ENCODE measurements at regions of chr13 and their contacts with region 1.

Region 1: DNA sequence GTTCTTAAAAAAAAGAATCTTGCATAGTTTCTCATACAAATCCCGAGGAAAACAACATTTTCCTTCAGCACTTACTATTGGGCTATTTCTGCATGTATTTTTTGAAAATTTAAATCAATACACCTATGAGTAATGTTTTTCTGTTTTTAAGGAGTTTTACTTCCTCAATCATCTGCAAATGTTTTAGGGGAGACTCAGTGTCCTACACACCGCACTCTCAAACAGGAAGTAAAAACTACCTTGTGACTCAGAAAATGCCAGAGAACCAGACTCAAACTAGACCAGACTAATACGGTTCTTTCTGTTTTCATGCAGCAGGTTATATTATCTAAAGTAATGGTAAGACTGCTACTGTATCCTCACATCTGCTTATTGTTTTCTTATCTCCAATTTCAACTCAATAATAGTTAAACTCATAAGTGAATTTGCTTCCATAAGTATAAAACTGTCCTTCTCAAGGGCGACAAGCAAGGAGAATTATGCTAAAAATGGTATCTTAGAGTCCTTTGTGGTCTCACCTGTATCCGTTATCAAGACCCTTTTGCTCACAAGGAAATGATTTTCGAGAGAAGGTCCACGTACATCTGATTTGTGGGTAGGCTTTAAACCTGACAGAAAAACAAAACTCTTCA is 52.5 kb downstream of the FLT3 start:
- DNase-seq: peak; percentile 84
- ATAC-seq: peak; percentile 92
- H3K4me3 ChIP-seq: peak overlapping the region in 3 of 5 experiments; percentile 22 to 33 (median 23)
- H3K4me3 Mint-ChIP-seq: peak overlapping the region; percentile 76
- H3K27ac ChIP-seq: peak overlapping the region; percentile 89 to 97
- H3K27ac Mint-ChIP-seq: peak overlapping the region; percentile 95
- H3K4me1 ChIP-seq: peaks cover 57 to 67% of the 10 kb centered on the region in 2 donors
- H3K4me1 Mint-ChIP-seq: peaks cover 56% of the 10 kb centered on the region
- H3K27me3 ChIP-seq: no peaks in the 10 kb centered on the region
- H3K27me3 Mint-ChIP-seq: no peaks in the 10 kb centered on the region
- CTCF ChIP-seq: no peak

Region 2: GRCh38 chr13:27264181-27264580 is 783.7 kb before region 1 on chr13:
- CTCF ChIA-PET with region 1: no interaction called
- POLR2A ChIA-PET with region 1: no interaction called
- intact Hi-C with region 1: loop called (anchors 10 kb)
- DNase-seq: no peak
- ATAC-seq: no peak
- H3K4me3 ChIP-seq: no peak overlapping the region
- H3K4me3 Mint-ChIP-seq: no peak overlapping the region
- H3K27ac ChIP-seq: peak overlapping the region in 1 of 2 donors; percentile 28
- H3K27ac Mint-ChIP-seq: peak overlapping the region; percentile 22
- H3K4me1 ChIP-seq: peaks cover 22 to 28% of the 10 kb centered on the region in 2 donors
- H3K4me1 Mint-ChIP-seq: peaks cover 60% of the 10 kb centered on the region
- H3K27me3 ChIP-seq: no peaks in the 10 kb centered on the region
- H3K27me3 Mint-ChIP-seq: no peaks in the 10 kb centered on the region
- CTCF ChIP-seq: no peak

Region 3: DNA sequence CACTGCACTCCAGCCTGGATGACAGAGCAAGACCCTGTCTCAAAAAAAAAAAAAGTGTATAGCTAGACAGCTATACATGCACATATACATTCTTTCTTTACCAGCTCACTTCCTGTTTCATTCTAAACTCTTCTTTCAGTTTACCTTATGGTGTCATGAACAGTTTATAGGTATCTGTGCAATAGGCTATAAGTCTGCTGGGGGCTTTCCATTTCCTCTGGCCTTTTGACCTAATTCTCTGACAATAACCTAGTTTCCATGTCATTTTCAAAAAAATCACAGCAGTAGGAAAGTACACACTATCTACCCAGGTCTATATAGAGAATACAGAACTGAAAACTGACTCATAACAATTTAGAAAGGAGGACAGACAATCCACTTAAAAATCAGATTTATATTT is 35.0 kb before region 1 on chr13:
- CTCF ChIA-PET with region 1: no interaction called
- POLR2A ChIA-PET with region 1: no interaction called
- intact Hi-C with region 1: loop called (anchors 5 kb)
- DNase-seq: peak; percentile 38
- ATAC-seq: peak; percentile 56
- H3K4me3 ChIP-seq: no peak overlapping the region
- H3K4me3 Mint-ChIP-seq: no peak overlapping the region
- H3K27ac ChIP-seq: no peak overlapping the region
- H3K27ac Mint-ChIP-seq: no peak overlapping the region
- H3K4me1 ChIP-seq: peaks cover 2 to 12% of the 10 kb centered on the region in 2 donors
- H3K4me1 Mint-ChIP-seq: peaks cover 12% of the 10 kb centered on the region
- H3K27me3 ChIP-seq: no peaks in the 10 kb centered on the region
- H3K27me3 Mint-ChIP-seq: no peaks in the 10 kb centered on the region
- CTCF ChIP-seq: no peak

Region 4: GRCh38 chr13:28100150-28101121 is 52.6 kb after region 1 on chr13 and contains the start of gene FLT3:
- CTCF ChIA-PET with region 1: no interaction called
- POLR2A ChIA-PET with region 1: no interaction called
- intact Hi-C with region 1: loop called (anchors 5 kb)
- DNase-seq: peak; percentile 75
- ATAC-seq: peak; percentile 71
- H3K4me3 ChIP-seq: peak within 1 kb of the TSS; percentile 20 to 60 (median 54)
- H3K4me3 Mint-ChIP-seq: peak within 1 kb of the TSS; percentile 83
- H3K27ac ChIP-seq: no peak within 1 kb of the TSS
- H3K27ac Mint-ChIP-seq: no peak within 1 kb of the TSS
- H3K4me1 ChIP-seq: peaks cover 13 to 16% of the 10 kb centered on the region in 2 donors
- H3K4me1 Mint-ChIP-seq: peaks cover 8% of the 10 kb centered on the region
- H3K27me3 ChIP-seq: peaks cover 0 to 40% (median 28%) of the 10 kb centered on the region in 4 experiments
- H3K27me3 Mint-ChIP-seq: peaks cover 50% of the 10 kb centered on the region
- CTCF ChIP-seq: no peak
- total RNA-seq, gene FLT3: 0.42 and 0.70 TPM in 2 replicates

Region 5: GRCh38 chr13:28268800-28269223 is 220.9 kb after region 1 on chr13:
- CTCF ChIA-PET with region 1: no interaction called
- POLR2A ChIA-PET with region 1: no interaction called
- intact Hi-C with region 1: loop called (anchors 5 kb)
- DNase-seq: peak; percentile 77
- ATAC-seq: peak; percentile 80
- H3K4me3 ChIP-seq: no peak overlapping the region
- H3K4me3 Mint-ChIP-seq: peak overlapping the region; percentile 58
- H3K27ac ChIP-seq: peak overlapping the region; percentile 57 to 64
- H3K27ac Mint-ChIP-seq: peak overlapping the region; percentile 79
- H3K4me1 ChIP-seq: peaks cover 9 to 19% of the 10 kb centered on the region in 2 donors
- H3K4me1 Mint-ChIP-seq: peaks cover 26% of the 10 kb centered on the region
- H3K27me3 ChIP-seq: no peaks in the 10 kb centered on the region
- H3K27me3 Mint-ChIP-seq: no peaks in the 10 kb centered on the region
- CTCF ChIP-seq: no peak

Region 6: DNA sequence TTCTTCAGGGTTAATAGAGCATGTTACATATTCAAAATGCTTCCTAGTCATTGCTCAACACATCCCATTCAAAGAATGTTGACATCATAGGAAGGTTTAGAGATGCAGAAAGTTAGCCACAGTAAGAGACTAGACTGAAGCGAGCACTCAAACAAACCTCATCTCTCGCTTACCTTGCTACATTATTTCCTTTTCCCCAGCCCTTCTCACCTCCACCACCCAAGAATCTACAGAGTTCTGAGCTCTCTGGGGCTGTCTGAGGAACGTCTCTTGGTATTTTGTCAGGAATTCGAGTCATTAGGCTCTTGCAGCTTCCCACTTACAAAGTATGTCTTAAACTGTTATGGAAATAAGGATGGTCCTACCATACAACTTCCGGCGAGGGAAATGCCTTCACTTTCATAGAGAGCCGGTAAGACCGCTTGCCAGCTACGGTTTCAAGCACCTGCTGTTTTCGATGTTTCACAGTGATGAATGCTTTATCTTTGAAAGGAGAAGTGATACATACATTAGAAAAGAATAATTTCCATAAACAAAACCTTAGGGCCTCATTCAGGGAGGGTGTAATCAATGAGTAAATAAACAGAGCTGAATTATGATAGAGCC is 381.9 kb after region 1 on chr13:
- CTCF ChIA-PET with region 1: no interaction called
- POLR2A ChIA-PET with region 1: no interaction called
- intact Hi-C with region 1: loop called (anchors 10 kb)
- DNase-seq: peak; percentile 79
- ATAC-seq: peak; percentile 89
- H3K4me3 ChIP-seq: peak overlapping the region; percentile 44 to 78 (median 64)
- H3K4me3 Mint-ChIP-seq: peak overlapping the region; percentile 89
- H3K27ac ChIP-seq: peak overlapping the region; percentile 88 to 93
- H3K27ac Mint-ChIP-seq: peak overlapping the region; percentile 98
- H3K4me1 ChIP-seq: peaks cover 27 to 28% of the 10 kb centered on the region in 2 donors
- H3K4me1 Mint-ChIP-seq: peaks cover 38% of the 10 kb centered on the region
- H3K27me3 ChIP-seq: no peaks in the 10 kb centered on the region
- H3K27me3 Mint-ChIP-seq: peaks cover under 1% of the 10 kb centered on the region
- CTCF ChIP-seq: no peak

Measured in B cell (primary cell).